WTC11 (cell line): ENCODE measurements at regions of chr7 and their contacts with region 1.

Region 1: DNA sequence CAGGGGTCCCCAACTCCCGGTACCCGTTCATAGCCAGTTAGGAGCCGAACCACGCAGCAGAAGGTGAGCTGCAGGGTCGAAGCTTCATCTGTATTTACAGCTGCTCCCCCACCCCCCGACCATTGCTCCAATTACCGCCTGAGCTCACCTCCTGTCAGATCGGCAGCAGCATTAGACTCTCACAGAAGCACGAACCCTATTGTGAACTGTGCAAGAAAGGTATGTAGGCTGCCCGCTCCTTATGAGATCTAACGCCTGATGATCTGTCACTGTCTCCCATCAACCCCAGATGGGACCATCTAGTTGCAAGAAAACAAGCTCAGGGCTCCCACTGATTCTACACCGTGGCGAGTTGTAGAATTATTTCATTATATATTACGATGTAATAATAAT is 14.6 kb upstream of the AZGP1 start:
- DNase-seq: no peak
- ATAC-seq: peak; percentile 10; the same call in 1 of the 2 replicates
- H3K4me3 Mint-ChIP-seq: peak overlapping the region; percentile 68
- H3K27ac Mint-ChIP-seq: no peak overlapping the region
- H3K4me1 Mint-ChIP-seq: peaks cover 5% of the 10 kb centered on the region
- H3K27me3 Mint-ChIP-seq: peaks cover 11% of the 10 kb centered on the region
- CTCF ChIP-seq: no peak

Region 2: DNA sequence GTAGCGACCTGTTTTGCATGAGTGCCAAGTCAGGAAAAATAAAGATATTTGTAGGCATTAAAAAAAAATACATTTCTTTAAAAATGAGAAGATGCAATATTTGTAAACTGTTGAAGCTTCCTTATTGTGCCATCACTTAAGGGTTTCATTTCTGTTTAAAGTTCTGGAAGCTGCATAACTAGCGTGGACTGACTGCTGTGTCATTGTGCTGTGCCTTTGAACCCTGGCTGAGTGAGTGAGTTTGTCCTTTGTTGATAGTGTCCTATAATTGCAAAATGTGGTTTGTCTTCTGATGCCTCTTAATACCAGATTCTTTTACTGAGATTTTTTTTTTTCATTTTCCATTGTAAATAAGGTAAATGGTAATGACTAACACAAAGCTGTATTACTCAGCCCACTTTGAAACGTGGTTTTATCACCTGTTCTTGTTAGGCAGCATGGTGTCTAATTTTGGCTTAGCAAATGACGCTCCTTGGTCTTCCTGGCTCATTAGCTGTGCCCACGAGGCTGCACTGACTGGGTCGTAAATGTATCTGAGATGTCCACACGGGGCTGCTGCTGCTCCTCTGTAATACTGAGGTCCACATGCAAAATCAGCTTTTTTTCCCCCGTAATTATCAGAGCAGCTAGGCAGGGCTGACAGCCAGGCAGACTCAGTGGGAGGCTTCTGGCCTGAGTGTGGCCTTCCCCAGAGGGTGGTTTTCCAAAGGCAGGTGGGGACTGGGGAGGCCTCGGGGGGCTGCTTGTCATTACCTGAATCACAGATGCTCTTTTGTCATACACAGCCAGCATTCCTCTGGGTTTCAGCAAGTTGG is 359.0 kb before region 1 on chr7:
- CTCF ChIA-PET with region 1: interaction called, 12 read pairs
- POLR2A ChIA-PET with region 1: no interaction called
- DNase-seq: peak; percentile 42
- ATAC-seq: peak; percentile 63
- H3K4me3 Mint-ChIP-seq: no peak overlapping the region
- H3K27ac Mint-ChIP-seq: peak overlapping the region; percentile 60; the same call in 1 of the 2 replicates
- H3K4me1 Mint-ChIP-seq: peaks cover 32% of the 10 kb centered on the region
- H3K27me3 Mint-ChIP-seq: no peaks in the 10 kb centered on the region
- CTCF ChIP-seq: no peak

Region 3: GRCh38 chr7:99709838-99710578 is 280.4 kb before region 1 on chr7:
- CTCF ChIA-PET with region 1: no interaction called
- POLR2A ChIA-PET with region 1: no interaction called
- DNase-seq: no peak
- ATAC-seq: no peak
- H3K4me3 Mint-ChIP-seq: no peak overlapping the region
- H3K27ac Mint-ChIP-seq: no peak overlapping the region
- H3K4me1 Mint-ChIP-seq: no peaks in the 10 kb centered on the region
- H3K27me3 Mint-ChIP-seq: peaks cover 9% of the 10 kb centered on the region
- CTCF ChIP-seq: no peak

Region 4: DNA sequence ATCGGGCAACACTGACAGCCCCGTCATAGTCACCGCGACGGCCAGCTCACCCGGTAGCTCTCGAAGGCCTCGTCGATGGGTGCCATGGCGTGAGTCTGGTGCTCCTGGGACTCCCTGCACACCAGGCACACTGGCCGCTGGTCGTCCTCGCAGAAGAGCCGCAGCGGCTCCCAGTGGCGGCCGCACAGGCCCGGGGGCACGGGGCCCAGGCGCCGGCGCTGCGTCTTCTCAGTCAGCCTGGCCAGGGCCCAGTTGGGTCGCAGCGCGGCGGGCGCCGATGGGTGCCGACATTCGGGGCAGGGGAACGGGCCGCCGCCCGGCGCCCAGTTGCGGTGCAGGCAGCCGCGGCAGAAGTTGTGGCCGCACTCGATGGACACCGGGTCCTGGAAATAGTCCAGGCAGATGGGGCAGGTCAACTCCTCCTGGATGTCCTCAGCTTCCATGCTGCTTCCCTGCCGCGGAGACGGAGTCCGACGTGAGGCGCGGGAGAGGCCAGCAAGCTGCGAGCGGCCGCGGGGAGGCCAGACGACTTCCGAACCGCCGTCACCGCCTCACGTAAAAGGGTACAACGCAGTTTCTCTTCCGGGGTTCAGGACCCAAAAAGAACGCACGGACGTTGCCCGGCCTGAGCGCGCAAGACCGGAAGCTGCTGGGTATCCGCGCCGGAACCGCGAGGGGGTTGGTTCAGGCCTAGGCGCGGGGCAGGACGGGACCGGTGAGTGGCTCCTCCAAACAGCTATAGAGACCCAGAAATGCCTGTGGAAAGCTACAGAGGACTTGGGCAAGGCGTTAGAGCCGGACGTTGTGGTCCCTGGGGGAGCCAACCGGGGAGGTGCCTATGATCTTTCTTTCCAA is 71.3 kb before region 1 on chr7 and contains the start of gene TRIM4:
- CTCF ChIA-PET with region 1: interaction called, 62 read pairs
- POLR2A ChIA-PET with region 1: interaction called, 10 read pairs
- DNase-seq: peak; percentile 62
- ATAC-seq: peak; percentile 94
- H3K4me3 Mint-ChIP-seq: peak within 1 kb of the TSS; percentile 72
- H3K27ac Mint-ChIP-seq: peak within 1 kb of the TSS; percentile 89
- H3K4me1 Mint-ChIP-seq: peaks cover 7% of the 10 kb centered on the region
- H3K27me3 Mint-ChIP-seq: peaks cover 3% of the 10 kb centered on the region
- CTCF ChIP-seq: no peak
- total RNA-seq, gene TRIM4: 6.6 to 9.8 TPM (median 9.3 TPM) in 3 replicates

Region 5: DNA sequence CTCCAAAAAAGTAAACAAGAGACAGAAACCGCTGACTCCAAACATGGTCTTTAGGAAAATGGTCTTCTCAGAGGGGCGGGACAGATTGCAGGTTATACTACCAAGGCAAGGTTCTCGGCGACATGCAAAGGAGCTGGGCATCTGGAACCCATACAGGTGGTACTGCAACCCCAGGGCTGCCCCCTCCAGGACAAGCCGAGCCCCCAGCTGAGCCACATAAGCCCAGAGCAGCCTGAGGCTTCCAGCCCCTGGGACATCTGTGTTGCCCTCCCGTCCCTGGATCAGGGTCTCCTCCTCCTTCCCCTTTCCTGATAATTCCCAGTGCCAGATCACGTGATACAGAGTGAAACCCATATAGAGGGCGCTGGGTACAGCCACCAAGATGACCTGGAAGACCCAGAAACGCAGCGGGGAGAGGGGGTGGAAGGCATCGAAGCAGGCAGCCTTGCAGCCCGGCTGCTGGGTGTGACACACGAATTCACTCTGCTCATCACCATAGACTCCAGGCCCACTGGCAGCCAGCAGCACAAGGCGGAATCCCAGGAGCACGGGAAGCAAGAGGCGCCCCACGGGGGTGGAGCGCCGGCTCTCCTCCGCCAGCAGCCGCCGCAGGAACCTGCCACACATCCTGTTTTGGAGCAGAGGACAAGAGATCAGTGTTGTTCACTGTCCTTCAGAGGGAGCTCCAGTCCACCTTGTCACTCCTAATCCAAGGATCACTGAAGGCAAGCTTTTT is 61.3 kb before region 1 on chr7 and contains the start of gene GJC3:
- CTCF ChIA-PET with region 1: interaction called, 30 read pairs
- POLR2A ChIA-PET with region 1: interaction called, 4 read pairs
- DNase-seq: peak; percentile 73
- ATAC-seq: peak; percentile 95
- H3K4me3 Mint-ChIP-seq: peak within 1 kb of the TSS; percentile 64
- H3K27ac Mint-ChIP-seq: no peak within 1 kb of the TSS; the same call in 1 of the 2 replicates
- H3K4me1 Mint-ChIP-seq: peaks cover 51% of the 10 kb centered on the region
- H3K27me3 Mint-ChIP-seq: peaks cover 14% of the 10 kb centered on the region
- CTCF ChIP-seq: no peak
- total RNA-seq, gene GJC3: 2.9 to 3.7 TPM (median 3.4 TPM) in 3 replicates

Region 6: GRCh38 chr7:99975782-99976521 is 14.5 kb before region 1 on chr7 and contains the start of gene AZGP1:
- CTCF ChIA-PET with region 1: interaction called, 70 read pairs
- POLR2A ChIA-PET with region 1: no interaction called
- DNase-seq: no peak
- ATAC-seq: no peak
- H3K4me3 Mint-ChIP-seq: no peak within 1 kb of the TSS
- H3K27ac Mint-ChIP-seq: no peak within 1 kb of the TSS
- H3K4me1 Mint-ChIP-seq: peaks cover 18% of the 10 kb centered on the region
- H3K27me3 Mint-ChIP-seq: no peaks in the 10 kb centered on the region; the same call in 1 of the 2 replicates
- CTCF ChIP-seq: no peak
- total RNA-seq, gene AZGP1: 1.6 to 2.7 TPM (median 1.8 TPM) in 3 replicates

Region 7: DNA sequence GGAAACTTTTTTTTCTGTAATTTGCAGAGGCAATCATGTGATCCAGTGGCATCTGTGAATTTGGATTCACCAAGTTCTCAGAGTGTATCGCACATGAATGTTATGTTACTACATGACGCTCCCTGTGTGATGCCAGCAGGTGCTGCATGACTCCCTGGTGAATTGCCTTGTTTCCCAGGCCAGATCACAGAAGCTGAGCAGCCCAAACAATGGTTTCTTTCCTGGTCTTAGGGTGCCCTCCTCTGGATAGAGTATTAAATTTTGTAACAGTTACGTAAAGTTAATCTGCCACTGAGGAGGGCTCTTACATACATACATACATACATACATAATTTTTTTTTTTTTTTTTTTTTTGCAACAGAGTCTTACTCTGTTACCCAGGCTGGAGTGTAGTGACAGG is 62.8 kb after region 1 on chr7:
- CTCF ChIA-PET with region 1: interaction called, 19 read pairs
- POLR2A ChIA-PET with region 1: no interaction called
- DNase-seq: no peak
- ATAC-seq: peak; percentile 16
- H3K4me3 Mint-ChIP-seq: no peak overlapping the region
- H3K27ac Mint-ChIP-seq: no peak overlapping the region
- H3K4me1 Mint-ChIP-seq: peaks cover 13% of the 10 kb centered on the region
- H3K27me3 Mint-ChIP-seq: no peaks in the 10 kb centered on the region
- CTCF ChIP-seq: no peak

Region 8: GRCh38 chr7:100081535-100082102 is 91.2 kb after region 1 on chr7 and contains the start of gene ZNF3:
- CTCF ChIA-PET with region 1: interaction called, 11 read pairs
- POLR2A ChIA-PET with region 1: no interaction called
- DNase-seq: peak; percentile 98
- ATAC-seq: peak; percentile 86
- H3K4me3 Mint-ChIP-seq: peak within 1 kb of the TSS; percentile 98
- H3K27ac Mint-ChIP-seq: peak within 1 kb of the TSS; percentile 95
- H3K4me1 Mint-ChIP-seq: peaks cover 23% of the 10 kb centered on the region
- H3K27me3 Mint-ChIP-seq: no peaks in the 10 kb centered on the region; the same call in 1 of the 2 replicates
- CTCF ChIP-seq: peak; percentile 86
- total RNA-seq, gene ZNF3: 38.1 to 48.3 TPM (median 39.1 TPM) in 3 replicates